Dorsolateral prefrontal cortex (tissue), 120 donors: ENCODE measurements at regions of chr10 and their contacts with region 1.

Region 1: DNA sequence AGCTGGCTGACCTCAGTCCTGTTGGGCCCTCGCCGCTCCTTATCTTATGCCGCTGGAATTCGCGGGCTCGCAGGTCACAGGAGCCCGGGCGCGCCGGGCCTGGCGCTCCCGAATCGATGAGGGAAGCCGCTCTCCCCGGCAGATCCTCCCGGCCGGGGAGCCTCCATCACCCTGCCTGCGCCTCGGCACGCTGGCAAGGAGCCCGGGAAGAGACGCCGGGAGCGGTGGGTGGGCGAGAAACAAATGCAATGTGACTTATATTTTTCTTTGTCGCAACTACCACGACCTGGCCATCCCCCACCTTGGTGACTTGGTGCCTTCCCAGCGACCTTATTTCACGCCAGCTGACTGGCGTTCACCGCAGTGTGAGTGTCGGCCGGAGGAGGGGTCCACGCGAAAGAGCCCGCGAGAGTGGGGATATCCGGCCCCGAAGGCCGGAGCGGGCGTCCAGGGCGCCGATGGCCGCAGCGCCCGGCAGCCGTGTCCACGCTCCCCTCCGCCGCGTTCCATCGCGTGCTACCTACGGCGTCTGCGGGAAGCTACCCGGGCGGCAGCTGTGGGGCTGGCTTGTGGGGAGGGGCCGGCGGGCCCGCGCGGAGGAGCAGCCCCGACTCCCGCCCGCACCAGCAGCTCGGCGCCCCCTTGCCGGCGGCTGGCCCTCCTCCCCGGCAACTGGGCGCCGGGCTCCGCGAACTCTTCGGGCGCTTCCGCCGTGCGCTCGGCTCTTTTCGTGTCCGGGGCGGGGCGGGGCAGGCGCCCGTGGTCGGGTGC is 494 bp upstream of the BMPR1A start:
- DNase-seq: peak; percentile 66 to 94 (median 84)
- H3K4me3 ChIP-seq: peak overlapping the region; percentile 54 to 96 (median 89)
- H3K27ac ChIP-seq: peak overlapping the region in 58 of 59 donors; percentile 40 to 97 (median 92)
- H3K27me3 ChIP-seq: no peaks in the 10 kb centered on the region
- CTCF ChIP-seq: peak in 16 of 56 donors; percentile 4 to 29 (median 18)

Region 2: DNA sequence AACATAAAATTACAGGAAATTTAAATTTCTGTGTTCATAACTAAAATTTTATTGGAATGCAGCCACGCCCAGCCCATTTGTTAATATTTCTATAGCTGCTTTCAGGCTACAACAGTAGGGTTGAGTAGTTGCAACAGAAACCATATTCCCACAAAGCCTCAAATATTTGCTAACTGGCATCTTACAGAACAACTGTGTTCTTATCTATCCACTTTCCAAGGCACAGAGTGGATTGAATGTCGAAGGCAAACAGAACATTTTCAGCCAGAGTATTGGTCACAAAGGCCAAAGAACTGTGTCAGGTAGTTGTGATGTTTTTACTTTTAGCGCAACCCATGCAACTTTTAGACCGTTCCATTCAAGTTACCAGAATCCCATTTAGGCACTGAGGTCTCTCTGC is 152.7 kb before region 1 on chr10:
- intact Hi-C with region 1: no loop called
- DNase-seq: no peak
- H3K4me3 ChIP-seq: no peak overlapping the region
- H3K27ac ChIP-seq: no peak overlapping the region
- H3K27me3 ChIP-seq: no peaks in the 10 kb centered on the region
- CTCF ChIP-seq: no peak

Region 3: DNA sequence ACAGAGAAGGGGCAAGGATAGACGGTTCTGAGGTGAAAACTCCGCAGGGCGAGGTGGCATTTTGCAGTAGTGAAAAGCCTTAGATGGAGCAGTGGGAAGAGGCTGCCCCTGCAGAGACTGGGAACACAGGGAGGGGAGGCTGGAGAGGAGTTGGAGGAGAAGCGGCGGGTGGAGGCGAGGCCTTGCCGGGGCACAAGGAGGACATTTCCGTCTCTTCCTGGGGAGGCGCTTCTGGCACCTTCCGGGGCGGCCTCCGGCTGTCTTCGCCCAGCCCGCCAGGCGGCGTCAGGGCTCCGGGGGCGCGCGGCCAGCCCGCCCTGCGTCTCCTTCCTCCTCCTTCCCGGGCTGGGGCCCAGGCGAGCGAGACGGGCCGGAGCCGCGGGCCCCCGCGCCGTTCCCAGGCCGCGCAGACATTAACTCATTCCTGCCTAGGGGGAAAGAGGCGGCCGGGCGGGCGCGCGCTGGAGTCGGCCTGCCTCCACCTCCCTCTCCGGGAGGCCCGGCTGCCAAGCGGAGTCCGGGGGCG is 44.9 kb before region 1 on chr10:
- intact Hi-C with region 1: loop called (anchors 1 to 2 kb)
- DNase-seq: peak; percentile 58 to 91 (median 80)
- H3K4me3 ChIP-seq: peak overlapping the region; percentile 45 to 82 (median 72)
- H3K27ac ChIP-seq: peak overlapping the region; percentile 66 to 99 (median 94)
- H3K27me3 ChIP-seq: no peaks in the 10 kb centered on the region
- CTCF ChIP-seq: peak; percentile 48 to 93 (median 84)

Region 4: GRCh38 chr10:86868353-86868752 is 112.4 kb after region 1 on chr10:
- intact Hi-C with region 1: loop called in 1 of 2 experiments (anchors 5 kb)
- DNase-seq: peak in 1 of 10 donors; percentile 34
- H3K4me3 ChIP-seq: no peak overlapping the region
- H3K27ac ChIP-seq: peak overlapping the region in 12 of 59 donors; percentile 2 to 54 (median 36)
- H3K27me3 ChIP-seq: no peaks in the 10 kb centered on the region
- CTCF ChIP-seq: no peak